Activated naive CD4-positive, alpha-beta T cell treated with anti-CD3 and anti-CD28 coated beads, Interleukin-2, amount 10 ng/mL, durations not matched to agents 7 days and 5 days (primary cell): ENCODE measurements at regions of chr10 and their contacts with region 1.

Region 1: DNA sequence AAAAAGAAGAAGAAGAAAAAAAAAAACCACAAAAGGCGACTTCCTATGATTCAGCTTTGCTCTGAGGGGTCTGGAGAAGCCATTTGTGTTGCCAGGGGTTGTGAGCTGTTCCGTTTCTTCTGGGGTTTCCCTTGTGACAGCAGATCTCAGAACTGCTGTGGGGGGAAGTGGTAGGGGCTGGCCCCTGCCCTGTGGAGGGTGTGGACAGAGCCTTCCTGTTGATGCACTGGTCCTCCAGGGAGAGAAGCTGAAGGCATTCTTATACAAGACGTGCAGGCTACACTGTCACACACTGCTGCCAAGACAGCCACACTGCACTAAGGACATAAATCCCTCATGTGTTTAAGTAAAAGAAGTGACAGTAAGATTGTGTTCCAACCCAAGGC is 17.3 kb upstream of the CSGALNACT2 start:
- DNase-seq: peak; percentile 84
- H3K4me3 Mint-ChIP-seq: peak overlapping the region; percentile 56
- H3K27ac Mint-ChIP-seq: peak overlapping the region; percentile 94
- H3K4me1 Mint-ChIP-seq: peaks cover 47% of the 10 kb centered on the region
- H3K27me3 Mint-ChIP-seq: peaks cover 14% of the 10 kb centered on the region

Region 2: GRCh38 chr10:42975558-42976340 is 145.2 kb before region 1 on chr10:
- CTCF ChIA-PET with region 1: no interaction called
- DNase-seq: peak; percentile 17
- H3K4me3 Mint-ChIP-seq: no peak overlapping the region
- H3K27ac Mint-ChIP-seq: no peak overlapping the region
- H3K4me1 Mint-ChIP-seq: peaks cover 5% of the 10 kb centered on the region
- H3K27me3 Mint-ChIP-seq: no peaks in the 10 kb centered on the region

Region 3: GRCh38 chr10:43090188-43090587 is 30.7 kb before region 1 on chr10:
- CTCF ChIA-PET with region 1: no interaction called
- DNase-seq: no peak
- H3K4me3 Mint-ChIP-seq: no peak overlapping the region
- H3K27ac Mint-ChIP-seq: no peak overlapping the region
- H3K4me1 Mint-ChIP-seq: no peaks in the 10 kb centered on the region
- H3K27me3 Mint-ChIP-seq: peaks cover 51% of the 10 kb centered on the region

Region 4: GRCh38 chr10:43100366-43100765 is 20.6 kb before region 1 on chr10:
- CTCF ChIA-PET with region 1: no interaction called
- DNase-seq: no peak
- H3K4me3 Mint-ChIP-seq: no peak overlapping the region
- H3K27ac Mint-ChIP-seq: no peak overlapping the region
- H3K4me1 Mint-ChIP-seq: peaks cover 7% of the 10 kb centered on the region
- H3K27me3 Mint-ChIP-seq: peaks cover 52% of the 10 kb centered on the region

Region 5: GRCh38 chr10:43138021-43138756 is 17.3 kb after region 1 on chr10 and contains the start of gene CSGALNACT2:
- CTCF ChIA-PET with region 1: interaction called, 32 read pairs
- DNase-seq: peak; percentile 90
- H3K4me3 Mint-ChIP-seq: peak within 1 kb of the TSS; percentile 91
- H3K27ac Mint-ChIP-seq: peak within 1 kb of the TSS; percentile 99
- H3K4me1 Mint-ChIP-seq: peaks cover 63% of the 10 kb centered on the region
- H3K27me3 Mint-ChIP-seq: no peaks in the 10 kb centered on the region

Region 6: DNA sequence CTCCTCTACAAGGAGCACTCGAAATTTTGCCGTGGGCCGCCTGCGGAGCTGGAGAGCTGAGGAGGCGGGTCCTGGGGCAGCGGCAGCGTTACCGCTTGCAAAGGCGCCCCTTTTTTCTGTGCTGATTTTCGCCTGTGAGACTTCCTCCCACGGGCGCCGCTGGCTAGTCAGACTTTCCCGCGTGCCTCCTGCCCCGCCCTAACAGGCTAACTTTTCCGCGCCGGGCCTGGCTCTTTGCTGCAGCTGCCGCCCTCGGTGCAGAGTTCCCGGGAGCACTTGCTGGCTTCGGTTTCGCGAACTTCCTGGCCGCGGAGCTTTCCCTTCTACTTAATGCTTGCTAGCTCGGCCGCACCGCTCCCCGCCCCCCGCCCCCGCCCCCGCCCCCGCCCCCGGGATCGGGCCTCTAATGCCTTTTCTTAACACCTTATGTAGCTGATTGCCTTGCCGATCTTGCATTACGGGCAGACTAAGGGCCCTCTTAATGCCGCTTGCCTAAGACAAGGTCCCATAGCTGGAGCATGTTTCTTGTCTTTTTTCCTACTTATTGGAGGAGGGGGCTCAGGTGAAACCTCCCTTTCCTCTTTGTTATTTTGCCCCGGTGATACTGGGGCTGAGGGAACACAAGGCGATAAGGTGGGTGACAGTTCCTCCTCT is 183.9 kb after region 1 on chr10:
- CTCF ChIA-PET with region 1: no interaction called
- DNase-seq: peak; percentile 71
- H3K4me3 Mint-ChIP-seq: peak overlapping the region; percentile 58
- H3K27ac Mint-ChIP-seq: peak overlapping the region; percentile 78
- H3K4me1 Mint-ChIP-seq: peaks cover 63% of the 10 kb centered on the region
- H3K27me3 Mint-ChIP-seq: peaks cover 26% of the 10 kb centered on the region